ENCODE measurements at regions of chr2 and their contacts with region 1.

Region 1: DNA sequence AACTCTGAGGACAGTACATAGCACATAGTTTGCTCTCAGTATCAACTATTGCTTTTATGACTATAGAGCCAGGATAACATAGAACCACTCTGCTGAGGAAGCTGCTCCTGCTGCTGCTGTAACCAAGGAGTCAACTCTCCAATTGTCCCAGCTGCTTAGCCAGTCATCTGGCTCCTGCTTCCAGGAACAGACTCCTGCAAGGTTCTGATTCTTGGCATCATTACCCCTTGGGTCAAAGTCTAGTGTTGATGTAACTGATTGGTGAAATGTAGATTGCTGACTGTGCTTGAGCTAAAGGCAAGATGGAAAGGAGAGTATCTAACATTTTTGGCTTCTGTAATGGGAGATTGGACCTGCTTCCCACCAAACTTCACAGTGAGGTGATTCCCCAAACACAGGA is 261.9 kb upstream of the FSHR start:
- DNase-seq: no peak
- H3K4me3 ChIP-seq: no peak overlapping the region
- H3K27ac ChIP-seq: no peak overlapping the region
- H3K4me1 ChIP-seq: no peaks in the 10 kb centered on the region
- H3K27me3 ChIP-seq: no peaks in the 10 kb centered on the region
- CTCF ChIP-seq: no peak
- POLR2A ChIP-seq: no peak

Region 2: GRCh38 chr2:49444005-49444404 is 27.8 kb after region 1 on chr2:
- intact Hi-C with region 1: loop called (anchors 2 kb)
- DNase-seq: no peak
- H3K4me3 ChIP-seq: no peak overlapping the region
- H3K27ac ChIP-seq: no peak overlapping the region
- H3K4me1 ChIP-seq: no peaks in the 10 kb centered on the region
- H3K27me3 ChIP-seq: no peaks in the 10 kb centered on the region
- CTCF ChIP-seq: no peak
- POLR2A ChIP-seq: no peak

Measured in esophagus squamous epithelium (tissue), 5 donors.